Ascending aorta (tissue), 2 donors: ENCODE measurements at regions of chr4 and their contacts with region 1.

Region 1: GRCh38 chr4:159102622-159103383 is at the start of gene RAPGEF2:
- DNase-seq: peak; percentile 65 to 95
- H3K4me3 ChIP-seq: peak within 1 kb of the TSS; percentile 92 to 93
- H3K27ac ChIP-seq: peak within 1 kb of the TSS; percentile 91 to 94
- H3K4me1 ChIP-seq: peaks cover 0 to 13% of the 10 kb centered on the region in 2 donors
- H3K27me3 ChIP-seq: no peaks in the 10 kb centered on the region
- CTCF ChIP-seq: no peak
- total RNA-seq, gene RAPGEF2: 65.7 TPM

Region 2: DNA sequence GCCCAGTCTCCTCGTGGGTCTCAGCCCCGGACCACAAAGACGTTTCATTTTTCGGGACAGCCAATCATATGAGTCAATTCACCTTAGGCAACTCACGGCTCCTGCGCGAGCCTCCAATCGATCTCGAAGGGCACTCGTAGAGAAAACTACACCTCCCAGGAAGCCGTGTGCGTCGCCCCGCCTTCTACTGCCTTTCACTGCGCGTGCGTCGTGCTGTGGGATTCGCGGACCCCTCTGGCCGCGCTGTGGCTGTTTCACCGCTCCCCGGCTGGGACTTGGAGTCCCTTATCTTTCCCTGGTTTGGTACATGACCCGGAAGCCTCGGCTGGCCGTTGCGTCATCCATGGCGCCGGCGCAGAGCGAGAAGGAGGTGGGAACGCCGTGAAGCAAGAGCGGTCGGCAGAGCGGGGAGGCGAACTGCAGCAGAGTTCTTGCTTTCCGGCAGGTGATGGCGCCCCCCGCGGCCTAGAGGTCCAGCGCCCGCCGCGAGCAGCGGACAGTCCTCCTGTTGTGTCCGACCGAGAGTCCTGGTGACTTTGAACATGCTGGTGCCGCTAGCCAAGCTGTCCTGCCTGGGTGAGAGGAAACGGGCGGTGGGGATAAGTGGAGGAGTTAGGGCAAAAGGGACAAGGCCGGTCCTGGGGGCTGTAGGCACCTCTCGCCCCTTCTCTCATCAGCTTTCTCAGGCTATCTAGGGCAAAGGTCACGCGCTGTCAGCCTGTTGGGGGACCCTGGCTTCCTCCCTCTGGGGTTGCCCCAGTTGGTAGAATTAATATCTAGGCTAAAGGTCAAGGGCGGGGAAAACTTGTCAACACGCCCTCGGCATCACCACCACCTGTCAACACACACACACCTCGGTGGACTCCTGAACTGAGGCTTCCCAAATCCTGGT is 430.6 kb before region 1 on chr4 and contains the start of gene ETFDH:
- intact Hi-C with region 1: loop called (anchors 5 kb)
- DNase-seq: peak; percentile 98 to 100
- H3K4me3 ChIP-seq: peak within 1 kb of the TSS; percentile 69 to 87
- H3K27ac ChIP-seq: peak within 1 kb of the TSS; percentile 96 to 98
- H3K4me1 ChIP-seq: peaks cover 0 to 12% of the 10 kb centered on the region in 2 donors
- H3K27me3 ChIP-seq: no peaks in the 10 kb centered on the region
- CTCF ChIP-seq: peak; percentile 62 to 70 (median 65)
- total RNA-seq, gene ETFDH: 1.4 TPM

Region 3: DNA sequence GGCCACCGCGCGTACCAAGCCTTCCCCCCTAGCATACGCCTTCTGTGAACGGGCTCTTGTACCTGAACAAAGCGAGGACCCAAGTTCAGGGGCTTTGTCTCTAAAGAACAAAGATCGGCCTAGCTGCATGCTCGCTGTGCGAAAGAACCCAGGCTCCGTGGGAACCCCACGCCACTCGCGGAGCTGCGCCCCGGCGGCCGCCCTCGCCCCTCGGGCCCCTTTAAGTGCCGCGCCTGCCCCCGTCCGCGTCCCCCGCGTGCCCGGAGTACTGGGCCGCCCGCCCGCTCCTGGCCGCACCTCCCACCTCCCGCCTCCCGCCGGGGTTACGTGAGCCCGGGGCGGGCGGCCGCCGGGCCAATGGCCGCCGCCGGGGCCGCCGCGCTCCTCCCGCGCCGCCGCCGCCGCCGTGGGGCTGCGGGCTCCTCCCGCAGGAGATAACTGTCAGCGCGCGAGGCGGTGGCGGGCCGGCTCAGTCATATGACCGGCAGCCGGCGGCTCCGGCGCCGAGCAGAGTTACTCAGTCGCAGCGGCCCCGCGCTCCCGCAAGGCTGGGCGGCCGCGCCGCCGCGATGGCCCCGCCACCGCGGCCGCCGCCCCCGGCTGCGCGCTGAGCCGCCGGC is 334.1 kb before region 1 on chr4 and contains the start of gene FNIP2:
- intact Hi-C with region 1: loop called (anchors 2 kb)
- DNase-seq: peak; percentile 45 to 88
- H3K4me3 ChIP-seq: peak within 1 kb of the TSS; percentile 86 to 99
- H3K27ac ChIP-seq: peak within 1 kb of the TSS; percentile 85 to 92
- H3K4me1 ChIP-seq: peaks cover 0 to 22% of the 10 kb centered on the region in 2 donors
- H3K27me3 ChIP-seq: no peaks in the 10 kb centered on the region
- CTCF ChIP-seq: no peak
- total RNA-seq, gene FNIP2: 44.1 TPM

Region 4: DNA sequence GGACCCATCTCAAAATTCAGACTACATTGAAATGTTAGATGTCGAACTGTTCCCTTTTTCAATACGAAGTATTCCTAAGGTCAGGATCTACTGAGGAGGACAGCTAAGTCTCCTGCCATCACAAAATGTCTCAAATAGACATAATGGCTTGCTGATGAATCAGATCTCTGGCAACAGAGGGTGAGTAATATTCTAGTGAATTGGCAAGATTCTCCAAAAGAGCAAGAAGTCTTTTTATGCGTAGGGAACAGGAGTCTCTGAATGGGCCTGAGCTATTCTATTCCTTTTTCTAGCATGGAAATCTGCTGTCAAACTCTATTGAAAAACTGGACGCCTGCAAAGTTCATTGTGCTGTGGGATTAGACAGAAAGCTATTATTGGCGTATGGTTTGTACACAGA is 188.6 kb before region 1 on chr4:
- intact Hi-C with region 1: loop called (anchors 5 kb)
- DNase-seq: no peak
- H3K4me3 ChIP-seq: no peak overlapping the region
- H3K27ac ChIP-seq: peak overlapping the region; percentile 79 to 88
- H3K4me1 ChIP-seq: peaks cover 8 to 18% of the 10 kb centered on the region in 2 donors
- H3K27me3 ChIP-seq: no peaks in the 10 kb centered on the region
- CTCF ChIP-seq: no peak

Region 5: GRCh38 chr4:159201168-159201567 is 98.4 kb after region 1 on chr4:
- intact Hi-C with region 1: loop called (anchors 5 kb)
- DNase-seq: no peak
- H3K4me3 ChIP-seq: no peak overlapping the region
- H3K27ac ChIP-seq: peak overlapping the region in 1 of 2 donors; percentile 37
- H3K4me1 ChIP-seq: peaks cover 0 to 22% of the 10 kb centered on the region in 2 donors
- H3K27me3 ChIP-seq: no peaks in the 10 kb centered on the region
- CTCF ChIP-seq: no peak

Region 6: GRCh38 chr4:159401791-159402380 is 299.1 kb after region 1 on chr4:
- intact Hi-C with region 1: no loop called
- DNase-seq: no peak
- H3K4me3 ChIP-seq: no peak overlapping the region
- H3K27ac ChIP-seq: no peak overlapping the region
- H3K4me1 ChIP-seq: peaks cover 6 to 17% of the 10 kb centered on the region in 2 donors
- H3K27me3 ChIP-seq: no peaks in the 10 kb centered on the region
- CTCF ChIP-seq: no peak

Region 7: DNA sequence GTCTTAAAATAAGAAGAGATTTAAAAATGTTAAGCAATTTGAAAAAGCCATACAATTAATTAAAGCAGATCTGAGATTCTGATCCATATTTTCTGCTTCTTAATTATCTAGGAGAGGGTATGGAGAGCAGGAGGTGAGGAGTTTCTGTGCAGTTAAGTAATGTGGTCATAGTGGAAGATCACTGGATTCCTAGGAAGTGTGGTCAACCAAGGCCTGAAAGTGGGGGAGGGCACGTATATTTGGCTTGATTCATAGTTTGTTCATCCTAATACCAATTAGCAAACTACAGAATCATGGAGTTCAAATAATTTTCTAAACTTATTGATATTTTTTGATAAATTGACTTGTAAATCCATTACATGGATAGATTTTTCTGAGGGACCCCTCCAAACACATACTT is 768.3 kb after region 1 on chr4:
- intact Hi-C with region 1: no loop called
- DNase-seq: no peak
- H3K4me3 ChIP-seq: no peak overlapping the region
- H3K27ac ChIP-seq: no peak overlapping the region
- H3K4me1 ChIP-seq: no peaks in the 10 kb centered on the region
- H3K27me3 ChIP-seq: no peaks in the 10 kb centered on the region
- CTCF ChIP-seq: no peak